HAP-1 (cell line): ENCODE measurements at regions of chr22 and their contacts with region 1.

Region 1: GRCh38 chr22:21712894-21713712 is 22.5 kb downstream of the YPEL1 start:
- DNase-seq: peak; percentile 68 to 77
- H3K4me3 ChIP-seq: no peak overlapping the region
- H3K4me1 ChIP-seq: no peaks in the 10 kb centered on the region
- H3K27me3 ChIP-seq: no peaks in the 10 kb centered on the region

Region 2: GRCh38 chr22:21867528-21868266 is 154.6 kb after region 1 on chr22 and contains the start of gene MAPK1:
- in situ Hi-C with region 1: no loop called
- DNase-seq: peak; percentile 85 to 95
- H3K4me3 ChIP-seq: peak within 1 kb of the TSS; percentile 80
- H3K4me1 ChIP-seq: peaks cover 23% of the 10 kb centered on the region
- H3K27me3 ChIP-seq: no peaks in the 10 kb centered on the region

Region 3: DNA sequence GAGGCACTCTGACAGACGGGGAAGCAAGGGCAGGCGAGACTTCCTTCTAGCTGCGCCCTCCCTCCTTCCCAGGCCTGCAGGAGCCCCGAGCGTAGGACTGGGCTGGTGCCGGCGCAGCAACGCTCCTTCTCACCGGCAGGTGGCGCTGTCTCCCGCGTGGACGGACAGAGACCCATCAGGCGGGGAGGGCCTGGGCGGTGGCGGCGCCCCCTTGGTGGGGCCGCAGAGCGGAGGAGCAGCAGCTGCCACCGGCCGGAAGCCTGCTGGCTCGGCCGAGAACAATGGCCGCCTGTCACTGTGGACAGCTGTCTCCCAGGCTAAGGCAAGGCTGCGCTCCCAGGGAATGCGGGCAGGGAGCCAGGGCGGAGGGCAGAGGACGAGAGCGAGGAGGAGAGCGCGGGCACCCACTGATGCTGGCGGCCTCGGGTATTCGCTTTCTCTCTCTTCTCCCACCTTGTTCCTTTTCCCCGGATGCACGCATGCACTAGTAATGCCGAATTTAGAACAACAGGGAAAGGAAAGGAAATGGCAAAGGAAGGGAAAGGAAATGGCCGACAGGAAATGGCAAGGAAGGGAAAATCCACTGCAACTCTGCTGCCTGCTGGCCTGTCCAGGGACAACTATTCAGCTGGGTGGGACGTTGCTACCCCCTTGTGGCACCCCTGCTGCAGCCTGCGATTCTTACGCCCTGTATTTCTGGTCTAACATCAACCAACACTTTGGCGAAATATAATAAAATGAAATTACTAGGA is 225.1 kb after region 1 on chr22:
- in situ Hi-C with region 1: loop called (anchors 10 kb)
- DNase-seq: peak; percentile 80 to 94
- H3K4me3 ChIP-seq: peak overlapping the region; percentile 38
- H3K4me1 ChIP-seq: peaks cover 4% of the 10 kb centered on the region; the same call in 1 of the 2 replicates
- H3K27me3 ChIP-seq: no peaks in the 10 kb centered on the region

Region 4: GRCh38 chr22:22009661-22010060 is 296.6 kb after region 1 on chr22:
- in situ Hi-C with region 1: no loop called
- DNase-seq: no peak
- H3K4me3 ChIP-seq: no peak overlapping the region
- H3K4me1 ChIP-seq: peaks cover 11% of the 10 kb centered on the region
- H3K27me3 ChIP-seq: no peaks in the 10 kb centered on the region

Region 5: GRCh38 chr22:22156716-22157347 is 443.7 kb after region 1 on chr22:
- in situ Hi-C with region 1: no loop called
- DNase-seq: peak; percentile 66 to 80
- H3K4me3 ChIP-seq: no peak overlapping the region
- H3K4me1 ChIP-seq: no peaks in the 10 kb centered on the region
- H3K27me3 ChIP-seq: peaks cover 5% of the 10 kb centered on the region; the same call in 1 of the 2 replicates